CD14-positive monocyte (primary cell): ENCODE measurements at regions of chr6 and their contacts with region 1.

Region 1: DNA sequence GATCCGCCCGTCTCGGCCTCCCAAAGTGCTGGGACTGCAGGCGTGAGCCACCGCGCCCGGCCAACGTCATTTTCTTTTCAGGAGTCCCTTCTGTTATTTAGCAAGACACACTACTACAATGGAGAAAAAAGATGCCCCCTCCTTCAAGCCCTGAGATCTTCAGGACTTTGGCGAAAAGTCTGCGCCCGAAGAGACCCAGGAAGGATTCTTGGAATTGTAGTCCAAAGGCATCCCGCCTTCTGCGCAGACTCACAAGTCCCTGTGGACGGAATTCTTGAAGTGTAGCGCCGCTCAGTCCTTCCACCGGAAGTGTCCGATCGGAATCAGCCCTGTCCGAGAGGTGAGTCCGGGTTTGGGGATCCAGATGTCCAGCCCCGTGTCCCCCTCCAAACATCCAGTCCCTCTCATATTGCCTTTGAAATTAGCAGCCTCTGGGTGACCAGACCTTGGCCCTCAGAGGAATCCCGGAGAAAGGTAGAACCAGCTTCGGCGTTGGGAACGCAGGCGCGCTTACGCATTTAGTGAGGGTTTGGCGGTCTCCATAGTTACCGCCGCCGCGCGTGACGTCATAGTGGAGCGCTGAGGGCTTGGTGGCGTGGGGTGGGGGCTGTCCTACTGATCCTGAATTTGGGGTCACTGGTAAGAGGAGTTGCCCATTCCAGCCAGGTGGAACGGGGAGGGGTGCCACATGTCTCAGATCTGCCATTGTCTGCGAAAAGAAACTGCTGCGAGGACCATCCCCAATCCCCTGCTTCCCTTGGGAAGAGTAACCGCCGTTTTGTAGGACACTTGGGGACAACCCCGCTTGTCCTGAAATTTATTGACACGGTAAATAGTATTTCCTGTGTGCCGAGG is 490 bp downstream of the ZNF165 start:
- DNase-seq: peak; percentile 94 to 96 (median 95)
- H3K4me3 ChIP-seq: peak overlapping the region; percentile 53 to 98 (median 80)
- H3K4me3 Mint-ChIP-seq: peak overlapping the region; percentile 96 to 97
- H3K27ac ChIP-seq: peak overlapping the region; percentile 80 to 94
- H3K27ac Mint-ChIP-seq: peak overlapping the region; percentile 93 to 100 (median 99)
- H3K4me1 ChIP-seq: peaks cover 4 to 8% of the 10 kb centered on the region in 2 donors
- H3K4me1 Mint-ChIP-seq: peaks cover 13% of the 10 kb centered on the region
- H3K27me3 ChIP-seq: no peaks in the 10 kb centered on the region
- H3K27me3 Mint-ChIP-seq: peaks cover 0 to 2% (median 0%) of the 10 kb centered on the region in 3 donors
- CTCF ChIP-seq: no peak

Region 2: GRCh38 chr6:27838058-27838944 is 242.6 kb before region 1 on chr6:
- intact Hi-C with region 1: no loop called
- DNase-seq: peak; percentile 95 to 100 (median 97)
- H3K4me3 ChIP-seq: peak overlapping the region; percentile 75 to 87 (median 77)
- H3K4me3 Mint-ChIP-seq: no peak overlapping the region
- H3K27ac ChIP-seq: peak overlapping the region; percentile 95 to 96
- H3K27ac Mint-ChIP-seq: no peak overlapping the region
- H3K4me1 ChIP-seq: peaks cover 33 to 47% of the 10 kb centered on the region in 2 donors
- H3K4me1 Mint-ChIP-seq: peaks cover 14% of the 10 kb centered on the region
- H3K27me3 ChIP-seq: no peaks in the 10 kb centered on the region
- H3K27me3 Mint-ChIP-seq: no peaks in the 10 kb centered on the region
- CTCF ChIP-seq: no peak

Region 3: DNA sequence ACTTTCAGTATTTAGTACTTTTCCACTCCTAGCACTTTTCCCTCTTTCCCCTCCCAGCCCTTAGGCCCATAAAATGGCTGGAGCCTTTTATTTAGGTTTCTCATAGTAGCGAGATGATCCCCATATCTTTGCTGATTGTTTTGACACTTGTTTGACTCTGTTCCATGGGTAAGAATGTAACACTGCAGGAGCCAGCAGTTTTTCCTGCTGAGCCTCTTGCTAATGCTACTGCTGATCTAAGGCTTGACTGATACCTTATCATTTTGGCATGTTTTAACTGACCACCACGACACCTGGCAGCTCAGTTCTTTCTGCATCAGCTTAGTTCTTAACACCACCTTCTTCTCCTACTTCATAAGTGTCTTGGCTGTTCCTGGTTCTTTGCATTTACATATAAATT is 90.4 kb after region 1 on chr6:
- intact Hi-C with region 1: no loop called
- DNase-seq: no peak
- H3K4me3 ChIP-seq: no peak overlapping the region
- H3K4me3 Mint-ChIP-seq: no peak overlapping the region
- H3K27ac ChIP-seq: no peak overlapping the region
- H3K27ac Mint-ChIP-seq: no peak overlapping the region
- H3K4me1 ChIP-seq: no peaks in the 10 kb centered on the region
- H3K4me1 Mint-ChIP-seq: no peaks in the 10 kb centered on the region
- H3K27me3 ChIP-seq: peaks cover 0 to 6% of the 10 kb centered on the region in 2 donors
- H3K27me3 Mint-ChIP-seq: peaks cover 2 to 7% (median 4%) of the 10 kb centered on the region in 3 donors
- CTCF ChIP-seq: no peak

Region 4: DNA sequence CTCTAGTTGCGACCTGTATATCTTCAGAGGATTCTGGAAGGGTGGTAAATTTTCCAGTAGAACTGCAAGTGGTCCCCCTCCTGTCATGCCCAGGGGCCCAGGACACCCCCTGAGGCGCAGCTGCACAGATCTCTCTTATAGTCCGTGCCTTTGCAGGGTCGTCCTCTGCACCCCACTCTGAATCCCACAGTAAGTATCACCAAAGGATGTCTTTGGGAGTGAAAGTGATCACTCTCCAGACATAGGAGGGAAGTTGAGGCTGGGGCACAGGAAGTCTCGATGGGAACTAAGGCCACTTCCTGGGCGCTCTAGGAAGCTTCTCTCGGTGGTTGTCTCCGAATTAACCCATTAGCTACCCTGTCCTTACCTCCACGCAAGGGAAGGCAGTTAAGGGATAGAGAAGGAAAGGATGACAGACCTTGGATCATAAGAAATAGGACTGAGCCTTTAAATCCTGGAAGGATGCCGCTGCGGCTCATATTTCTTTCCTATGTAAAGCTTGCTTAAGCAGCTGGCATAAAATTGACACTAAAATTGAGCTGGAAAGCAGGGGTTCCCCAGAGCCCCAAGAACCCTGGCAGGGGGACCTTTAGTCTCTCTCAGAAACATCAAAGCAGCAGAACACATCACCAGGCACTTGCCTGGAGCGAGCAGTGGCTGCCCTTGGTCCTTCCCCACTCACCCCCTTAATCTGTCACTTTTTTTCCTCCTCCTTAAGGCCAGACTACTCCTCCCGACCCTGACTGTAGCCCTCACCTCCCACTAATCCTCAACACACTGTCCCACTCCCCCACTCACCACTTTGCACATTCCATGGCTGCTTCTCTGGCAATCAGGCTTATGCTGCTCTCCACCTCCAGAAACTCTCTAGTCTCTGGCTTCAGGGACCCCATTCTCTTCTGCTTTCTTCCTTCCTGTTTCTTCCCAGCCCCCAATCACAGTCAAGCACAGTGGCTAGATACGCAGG is 171.4 kb after region 1 on chr6 and contains the start of gene ZKSCAN4:
- intact Hi-C with region 1: loop called in 1 of 2 experiments (anchors 5 kb)
- DNase-seq: peak; percentile 72 to 86 (median 78)
- H3K4me3 ChIP-seq: peak within 1 kb of the TSS; percentile 83 to 99 (median 99)
- H3K4me3 Mint-ChIP-seq: peak within 1 kb of the TSS; percentile 98
- H3K27ac ChIP-seq: peak within 1 kb of the TSS; percentile 46 to 73
- H3K27ac Mint-ChIP-seq: peak within 1 kb of the TSS; percentile 85 to 93 (median 88)
- H3K4me1 ChIP-seq: peaks cover 33 to 39% of the 10 kb centered on the region in 2 donors
- H3K4me1 Mint-ChIP-seq: peaks cover 40% of the 10 kb centered on the region
- H3K27me3 ChIP-seq: no peaks in the 10 kb centered on the region
- H3K27me3 Mint-ChIP-seq: peaks cover 0 to 1% (median 0%) of the 10 kb centered on the region in 3 donors
- CTCF ChIP-seq: no peak
- polyA plus RNA-seq, gene ZKSCAN4: 1.5 to 2.0 (median 1.6) TPM